ENCODE measurements at regions of chr2 and their contacts with region 1.

Region 1: GRCh38 chr2:210476194-210477128 is at the start of gene LANCL1:
- DNase-seq: peak; percentile 84
- ATAC-seq: peak; percentile 100
- H3K4me3 ChIP-seq: peak within 1 kb of the TSS; percentile 64 to 95 (median 83)
- H3K4me3 Mint-ChIP-seq: peak within 1 kb of the TSS; percentile 100
- H3K27ac ChIP-seq: peak within 1 kb of the TSS; percentile 82 to 85
- H3K27ac Mint-ChIP-seq: peak within 1 kb of the TSS; percentile 98
- H3K4me1 ChIP-seq: peaks cover 14 to 15% of the 10 kb centered on the region in 2 donors
- H3K4me1 Mint-ChIP-seq: peaks cover 30% of the 10 kb centered on the region
- H3K27me3 ChIP-seq: no peaks in the 10 kb centered on the region
- H3K27me3 Mint-ChIP-seq: no peaks in the 10 kb centered on the region
- CTCF ChIP-seq: no peak
- total RNA-seq, gene LANCL1: 26.8 and 30.0 TPM in 2 replicates

Region 2: DNA sequence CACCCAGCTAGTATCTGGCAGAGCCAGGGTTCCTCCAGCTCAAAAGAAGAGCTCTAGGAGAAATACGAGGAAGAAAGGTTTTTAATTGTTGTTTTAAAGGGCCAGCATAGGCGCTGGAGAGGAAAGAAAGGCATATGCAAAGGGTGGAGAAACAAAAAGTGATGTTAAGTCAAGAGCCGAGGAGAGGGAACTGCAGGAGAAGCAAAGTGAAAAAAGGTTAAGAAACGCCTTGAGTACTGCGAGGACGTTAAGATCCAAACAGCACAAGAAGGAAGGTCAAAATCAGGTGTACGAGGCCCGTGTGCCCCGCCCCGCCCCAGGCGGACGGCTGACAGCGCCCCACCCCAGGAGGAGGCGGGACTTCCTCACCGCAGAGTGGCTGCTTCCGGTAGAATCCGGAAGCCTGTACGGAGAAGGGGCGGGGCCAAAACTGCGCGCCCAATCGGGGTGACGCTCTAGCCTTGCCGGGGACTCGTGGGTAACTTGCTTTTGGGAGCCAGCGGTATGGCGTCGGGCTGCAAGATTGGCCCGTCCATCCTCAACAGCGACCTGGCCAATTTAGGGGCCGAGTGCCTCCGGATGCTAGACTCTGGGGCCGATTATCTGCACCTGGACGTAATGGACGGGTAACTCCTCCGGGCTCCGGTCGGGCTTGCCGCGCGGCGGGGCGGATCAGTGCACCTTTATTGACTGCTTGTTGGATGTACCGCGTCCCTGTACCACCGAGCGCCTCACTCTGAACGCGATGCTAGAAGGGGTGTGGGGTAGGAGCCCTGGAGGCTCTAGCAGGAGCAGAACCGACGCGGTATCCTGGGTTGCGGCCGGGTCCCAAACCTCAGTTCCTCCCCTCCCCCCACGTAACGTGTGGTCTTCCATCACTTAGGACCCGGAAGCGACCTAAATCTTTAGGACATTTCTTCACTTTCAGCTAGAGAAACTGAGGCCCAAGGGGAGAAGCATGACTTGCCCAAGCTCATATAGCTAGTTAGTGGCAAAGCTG is 474.0 kb before region 1 on chr2 and contains the start of gene RPE:
- CTCF ChIA-PET with region 1: no interaction called
- POLR2A ChIA-PET with region 1: no interaction called
- intact Hi-C with region 1: loop called (anchors 5 kb)
- DNase-seq: peak; percentile 97
- ATAC-seq: peak; percentile 99
- H3K4me3 ChIP-seq: peak within 1 kb of the TSS; percentile 79 to 96 (median 93)
- H3K4me3 Mint-ChIP-seq: peak within 1 kb of the TSS; percentile 89
- H3K27ac ChIP-seq: peak within 1 kb of the TSS; percentile 68 to 88
- H3K27ac Mint-ChIP-seq: peak within 1 kb of the TSS; percentile 92
- H3K4me1 ChIP-seq: peaks cover 28 to 33% of the 10 kb centered on the region in 2 donors
- H3K4me1 Mint-ChIP-seq: peaks cover 45% of the 10 kb centered on the region
- H3K27me3 ChIP-seq: no peaks in the 10 kb centered on the region
- H3K27me3 Mint-ChIP-seq: peaks cover 3% of the 10 kb centered on the region
- CTCF ChIP-seq: no peak
- total RNA-seq, gene RPE: 47.8 and 50.7 TPM in 2 replicates

Region 3: GRCh38 chr2:210460322-210461227 is 15.9 kb before region 1 on chr2:
- CTCF ChIA-PET with region 1: interaction called, 4 read pairs
- POLR2A ChIA-PET with region 1: interaction called, 5 read pairs
- intact Hi-C with region 1: loop called (anchors 2 kb)
- DNase-seq: no peak
- ATAC-seq: peak; percentile 19
- H3K4me3 ChIP-seq: no peak overlapping the region
- H3K4me3 Mint-ChIP-seq: peak overlapping the region; percentile 74
- H3K27ac ChIP-seq: peak overlapping the region; percentile 17 to 82
- H3K27ac Mint-ChIP-seq: peak overlapping the region; percentile 64
- H3K4me1 ChIP-seq: peaks cover 41 to 50% of the 10 kb centered on the region in 2 donors
- H3K4me1 Mint-ChIP-seq: peaks cover 58% of the 10 kb centered on the region
- H3K27me3 ChIP-seq: no peaks in the 10 kb centered on the region
- H3K27me3 Mint-ChIP-seq: no peaks in the 10 kb centered on the region
- CTCF ChIP-seq: no peak

Measured in B cell (primary cell).